ENCODE measurements at regions of chr7 and their contacts with region 1.

Region 1: DNA sequence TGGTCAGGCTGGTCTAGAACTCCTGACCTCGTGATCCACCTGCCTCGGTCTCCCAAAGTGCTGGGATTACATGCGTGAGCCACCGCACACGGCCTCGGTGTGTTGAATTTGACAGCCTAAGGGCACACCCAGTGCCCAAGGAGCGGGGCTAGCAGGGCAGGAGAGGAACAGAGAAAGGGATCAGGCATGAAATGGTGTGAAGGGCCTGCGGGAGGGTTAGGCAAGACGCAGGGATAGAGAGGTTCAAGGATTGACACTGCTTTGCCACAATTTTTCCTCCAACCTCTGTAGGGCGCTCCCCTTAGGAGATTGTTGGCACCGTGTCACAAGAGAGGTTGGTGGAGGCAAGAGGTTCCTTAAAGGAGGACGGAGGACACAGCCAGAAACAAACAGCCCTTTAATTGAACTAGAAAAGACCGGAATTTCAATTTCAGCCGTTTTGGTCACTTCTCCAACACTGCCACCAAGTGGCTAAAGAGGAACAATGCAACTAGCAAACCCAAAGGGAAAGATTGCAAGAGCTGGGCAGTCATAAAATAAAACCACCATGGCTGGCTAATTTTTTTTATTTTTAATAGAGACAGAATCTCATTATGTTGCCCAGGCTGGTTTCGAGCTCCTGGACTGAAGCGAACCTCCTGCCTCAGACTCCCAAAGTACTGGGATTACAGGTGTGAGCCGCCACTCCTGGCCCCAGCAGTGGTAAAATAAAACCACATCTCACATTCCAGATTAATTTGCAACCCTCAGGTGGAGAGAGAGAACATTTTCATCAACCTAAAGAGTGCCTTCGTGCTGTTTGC is 6.9 kb upstream of the CREB3L2 start:
- DNase-seq: peak; percentile 40 to 67
- H3K4me3 ChIP-seq: no peak overlapping the region
- H3K4me3 Mint-ChIP-seq: peak overlapping the region; percentile 24
- H3K27ac Mint-ChIP-seq: peak overlapping the region; percentile 57
- H3K4me1 ChIP-seq: 0 out of 2 replicates have a peak, but pooled peaks cover 3% of the 10 kb centered on the region
- H3K4me1 Mint-ChIP-seq: peaks cover 9% of the 10 kb centered on the region
- H3K27me3 ChIP-seq: no peaks in the 10 kb centered on the region
- H3K27me3 Mint-ChIP-seq: no peaks in the 10 kb centered on the region
- CTCF ChIP-seq: peak; percentile 78 to 86

Region 2: GRCh38 chr7:137606061-137606674 is 402.6 kb before region 1 on chr7:
- CTCF ChIA-PET with region 1: no interaction called
- POLR2A ChIA-PET with region 1: no interaction called
- intact Hi-C with region 1: loop called (anchors 2 kb)
- DNase-seq: peak in 1 of 2 experiments; percentile 23
- H3K4me3 ChIP-seq: no peak overlapping the region
- H3K4me3 Mint-ChIP-seq: no peak overlapping the region
- H3K27ac Mint-ChIP-seq: no peak overlapping the region
- H3K4me1 ChIP-seq: no peaks in the 10 kb centered on the region
- H3K4me1 Mint-ChIP-seq: no peaks in the 10 kb centered on the region
- H3K27me3 ChIP-seq: no peaks in the 10 kb centered on the region
- H3K27me3 Mint-ChIP-seq: peaks cover 16% of the 10 kb centered on the region
- CTCF ChIP-seq: peak; percentile 29 to 51

Region 3: DNA sequence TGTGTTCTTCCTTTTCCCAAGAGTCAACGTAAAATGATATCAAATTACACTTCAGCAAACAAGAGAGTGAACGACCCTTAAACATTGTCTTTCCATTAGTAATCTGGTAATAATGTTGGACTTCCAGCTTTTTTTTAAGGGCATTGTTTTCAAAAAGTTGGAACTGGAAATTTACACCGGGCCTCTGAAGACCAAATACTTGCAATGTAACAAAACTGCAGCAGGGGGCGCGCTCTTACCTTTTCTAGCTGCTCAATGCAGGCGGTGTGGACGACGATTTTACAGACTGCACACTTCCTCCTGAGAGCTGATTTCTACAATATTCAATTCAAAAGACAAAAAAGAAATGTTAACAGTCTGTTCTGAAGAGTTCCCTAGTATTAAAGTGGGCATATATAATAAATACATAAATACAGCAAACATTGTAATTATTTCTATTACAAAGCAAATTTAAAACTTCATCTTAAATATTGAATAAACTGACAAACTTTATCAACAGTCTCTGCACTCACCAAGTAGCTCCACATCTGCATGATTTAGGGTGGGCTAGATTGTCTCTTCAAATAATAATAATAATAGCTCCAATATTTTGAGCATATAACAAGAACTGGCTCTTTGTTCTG is 352.4 kb before region 1 on chr7:
- CTCF ChIA-PET with region 1: interaction called, 4 read pairs
- POLR2A ChIA-PET with region 1: no interaction called
- intact Hi-C with region 1: loop called (anchors 1 kb)
- DNase-seq: peak; percentile 66 to 73
- H3K4me3 ChIP-seq: no peak overlapping the region
- H3K4me3 Mint-ChIP-seq: no peak overlapping the region
- H3K27ac Mint-ChIP-seq: no peak overlapping the region
- H3K4me1 ChIP-seq: no peaks in the 10 kb centered on the region
- H3K4me1 Mint-ChIP-seq: no peaks in the 10 kb centered on the region
- H3K27me3 ChIP-seq: no peaks in the 10 kb centered on the region
- H3K27me3 Mint-ChIP-seq: peaks cover 8% of the 10 kb centered on the region
- CTCF ChIP-seq: peak; percentile 88 to 90

Region 4: GRCh38 chr7:137816696-137817320 is 191.9 kb before region 1 on chr7:
- CTCF ChIA-PET with region 1: no interaction called
- POLR2A ChIA-PET with region 1: no interaction called
- intact Hi-C with region 1: loop called (anchors 1 kb)
- DNase-seq: peak in 1 of 2 experiments; percentile 25
- H3K4me3 ChIP-seq: no peak overlapping the region
- H3K4me3 Mint-ChIP-seq: no peak overlapping the region
- H3K27ac Mint-ChIP-seq: no peak overlapping the region
- H3K4me1 ChIP-seq: no peaks in the 10 kb centered on the region
- H3K4me1 Mint-ChIP-seq: no peaks in the 10 kb centered on the region
- H3K27me3 ChIP-seq: no peaks in the 10 kb centered on the region
- H3K27me3 Mint-ChIP-seq: peaks cover 5% of the 10 kb centered on the region
- CTCF ChIP-seq: peak in 1 of 2 experiments; percentile 32

Measured in Caco-2 (cell line).